ENCODE measurements at regions of chr20 and their contacts with region 1.

Region 1: GRCh38 chr20:23200918-23201317 is 114.8 kb upstream of the CD93 start:
- DNase-seq: peak; percentile 54
- ATAC-seq: no peak

Region 2: GRCh38 chr20:22861229-22861980 is 339.5 kb before region 1 on chr20:
- intact Hi-C with region 1: loop called (anchors 10 kb)
- DNase-seq: no peak
- ATAC-seq: no peak

Region 3: DNA sequence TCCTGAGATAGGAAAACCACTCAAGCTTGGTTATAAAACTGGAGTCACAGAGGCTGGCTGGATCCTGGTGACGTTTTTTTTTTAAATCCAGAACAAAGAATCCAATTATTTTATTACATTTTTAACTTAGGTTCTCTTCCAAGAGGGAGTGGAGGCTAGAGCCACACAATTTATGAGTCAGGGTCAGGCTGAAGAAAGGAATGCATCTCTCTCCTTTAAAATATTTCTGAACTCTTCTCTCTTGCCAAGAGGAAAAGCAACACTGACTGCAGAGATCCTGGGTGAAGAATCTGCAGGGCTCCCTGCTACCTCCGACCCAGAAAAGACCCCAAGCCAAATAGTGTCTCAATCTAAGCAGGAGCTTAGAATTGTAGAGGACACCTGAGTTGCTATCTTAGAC is 254.3 kb before region 1 on chr20:
- intact Hi-C with region 1: no loop called
- DNase-seq: no peak
- ATAC-seq: no peak

Region 4: DNA sequence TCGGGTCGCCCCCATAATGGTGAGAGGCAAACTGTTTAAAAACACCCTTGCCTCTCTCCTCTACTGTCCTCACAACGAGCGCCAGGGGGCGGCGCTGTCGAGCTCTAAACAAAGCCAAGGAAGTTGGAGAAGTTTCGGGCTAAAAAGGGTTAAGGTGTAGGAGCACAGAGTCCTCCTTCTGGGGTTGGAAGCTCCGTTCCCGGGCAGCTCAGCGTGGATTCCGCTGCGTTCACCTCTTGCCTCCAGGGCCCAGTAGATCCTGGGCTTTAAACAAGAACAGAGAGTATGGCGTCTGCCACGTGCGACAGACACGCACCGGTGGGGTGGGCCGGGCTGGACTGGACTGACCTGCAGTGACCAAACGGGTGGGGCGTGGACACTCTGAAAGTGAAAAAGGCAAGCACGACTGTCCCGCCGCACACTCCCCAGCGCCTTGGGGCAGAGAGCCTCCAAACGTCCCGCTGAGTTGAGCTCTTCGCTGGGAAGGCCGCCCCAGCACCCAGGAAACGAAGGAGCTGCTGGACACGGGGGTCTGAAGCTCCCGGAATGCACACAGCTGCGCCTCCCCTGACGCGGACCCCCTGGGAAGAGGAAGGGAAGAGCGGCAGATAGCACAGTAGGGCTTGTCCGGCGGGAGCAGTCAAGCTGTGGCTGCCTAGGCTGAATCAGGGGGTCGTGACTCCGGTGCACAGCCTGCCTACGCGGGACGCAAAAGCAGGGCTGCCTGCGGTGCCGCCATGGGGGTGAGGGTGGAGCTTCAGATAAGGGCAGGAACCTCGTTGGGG is 149.9 kb before region 1 on chr20:
- intact Hi-C with region 1: loop called (anchors 10 kb)
- DNase-seq: peak; percentile 93
- ATAC-seq: peak; percentile 60

Region 5: GRCh38 chr20:23349338-23350195 is 148.6 kb after region 1 on chr20:
- intact Hi-C with region 1: loop called (anchors 10 kb)
- DNase-seq: peak; percentile 85
- ATAC-seq: peak; percentile 77